ENCODE measurements at regions of chr9 and their contacts with region 1.

Region 1: DNA sequence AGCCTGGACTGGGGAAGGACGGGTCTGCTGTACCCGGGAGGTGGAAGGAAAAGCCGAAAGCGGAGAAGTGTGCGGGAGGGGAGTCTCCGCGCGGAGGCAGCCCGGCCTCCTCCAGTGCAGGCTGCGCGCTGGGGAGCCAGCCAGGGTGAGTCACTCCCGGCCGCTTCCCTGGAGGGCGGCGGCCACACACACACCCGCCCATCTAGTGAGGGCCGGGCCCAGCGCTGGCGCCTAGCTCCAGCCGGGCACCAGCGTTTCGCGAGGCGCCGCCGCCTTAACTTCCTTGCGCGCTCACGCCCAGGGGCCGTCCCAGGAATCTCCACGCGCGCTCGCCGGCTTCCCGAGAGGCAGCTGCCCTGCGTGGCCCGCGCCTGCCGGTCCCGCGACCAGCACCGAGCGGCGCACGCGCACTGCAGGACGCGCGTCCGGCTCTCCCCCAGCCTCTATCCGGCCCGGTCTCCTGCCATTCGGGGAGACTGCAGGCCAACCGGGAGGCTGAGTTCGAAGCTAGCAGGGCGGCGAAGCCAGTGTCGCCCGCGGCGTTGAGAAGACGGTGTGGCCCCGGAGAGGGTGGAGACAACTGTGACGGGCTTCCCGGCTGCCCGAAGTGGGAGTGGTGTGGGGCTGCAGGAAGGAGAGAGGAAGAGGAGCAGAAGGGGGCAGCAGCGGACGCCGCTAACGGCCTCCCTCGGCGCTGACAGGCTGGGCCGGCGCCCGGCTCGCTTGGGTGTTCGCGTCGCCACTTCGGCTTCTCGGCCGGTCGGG is at the start of gene JAK2:
- DNase-seq: peak; percentile 91
- H3K4me3 Mint-ChIP-seq: no peak within 1 kb of the TSS
- H3K27ac Mint-ChIP-seq: peak within 1 kb of the TSS; percentile 96
- H3K4me1 Mint-ChIP-seq: peaks cover 45% of the 10 kb centered on the region
- H3K27me3 Mint-ChIP-seq: no peaks in the 10 kb centered on the region
- total RNA-seq, gene JAK2: 29.4 and 32.3 TPM in 2 replicates

Region 2: GRCh38 chr9:4762108-4762885 is 222.5 kb before region 1 on chr9:
- intact Hi-C with region 1: loop called (anchors 1 kb)
- DNase-seq: peak; percentile 72
- H3K4me3 Mint-ChIP-seq: peak overlapping the region; percentile 63
- H3K27ac Mint-ChIP-seq: peak overlapping the region; percentile 78
- H3K4me1 Mint-ChIP-seq: peaks cover 12% of the 10 kb centered on the region
- H3K27me3 Mint-ChIP-seq: peaks cover 9% of the 10 kb centered on the region

Region 3: GRCh38 chr9:4866239-4866969 is 118.4 kb before region 1 on chr9:
- intact Hi-C with region 1: loop called (anchors 1 kb)
- DNase-seq: peak; percentile 44
- H3K4me3 Mint-ChIP-seq: peak overlapping the region; percentile 72
- H3K27ac Mint-ChIP-seq: peak overlapping the region; percentile 95
- H3K4me1 Mint-ChIP-seq: peaks cover 59% of the 10 kb centered on the region
- H3K27me3 Mint-ChIP-seq: no peaks in the 10 kb centered on the region

Region 4: GRCh38 chr9:4894076-4894475 is 90.7 kb before region 1 on chr9:
- intact Hi-C with region 1: no loop called
- DNase-seq: no peak
- H3K4me3 Mint-ChIP-seq: no peak overlapping the region
- H3K27ac Mint-ChIP-seq: no peak overlapping the region
- H3K4me1 Mint-ChIP-seq: peaks cover 14% of the 10 kb centered on the region
- H3K27me3 Mint-ChIP-seq: no peaks in the 10 kb centered on the region

Region 5: DNA sequence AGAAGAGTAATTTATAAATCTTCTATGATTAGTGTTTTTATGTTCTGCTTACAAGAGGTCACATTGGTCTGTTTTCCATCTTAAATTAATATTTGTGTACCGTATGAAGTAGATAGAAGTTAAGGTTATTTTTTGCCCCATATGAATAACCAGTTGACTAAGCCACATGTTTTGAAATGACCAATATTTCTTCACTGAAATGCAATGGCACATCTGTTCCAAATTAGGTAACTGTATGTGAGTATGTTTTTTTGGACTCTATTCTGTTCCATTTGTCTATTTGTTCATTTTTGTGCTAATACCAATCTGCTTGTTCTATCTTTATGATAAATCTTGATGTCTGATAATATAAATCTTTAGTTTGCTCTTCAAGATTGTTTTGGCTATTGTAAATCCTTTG is 18.0 kb after region 1 on chr9:
- intact Hi-C with region 1: no loop called
- DNase-seq: no peak
- H3K4me3 Mint-ChIP-seq: no peak overlapping the region
- H3K27ac Mint-ChIP-seq: no peak overlapping the region
- H3K4me1 Mint-ChIP-seq: peaks cover 27% of the 10 kb centered on the region
- H3K27me3 Mint-ChIP-seq: no peaks in the 10 kb centered on the region

Region 6: DNA sequence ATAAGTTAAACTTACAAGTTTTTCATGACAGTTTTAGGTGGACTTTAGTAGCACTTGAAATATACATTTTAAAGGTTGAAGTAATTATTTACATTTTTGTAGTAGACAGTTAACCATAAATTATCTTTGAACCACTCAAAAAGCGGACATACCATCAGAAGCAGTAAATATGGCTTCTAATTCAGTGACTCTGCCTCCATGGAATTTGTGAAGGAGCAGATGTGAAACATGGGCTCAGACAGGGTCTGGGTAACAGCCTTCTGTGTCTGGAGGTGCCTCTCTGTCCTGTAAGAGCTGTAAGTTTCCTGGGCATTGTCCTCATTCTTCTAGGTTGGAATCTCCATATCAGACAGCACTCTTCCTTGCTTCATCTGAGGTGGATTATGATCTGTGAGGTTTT is 307.3 kb after region 1 on chr9:
- intact Hi-C with region 1: no loop called
- DNase-seq: no peak
- H3K4me3 Mint-ChIP-seq: no peak overlapping the region
- H3K27ac Mint-ChIP-seq: no peak overlapping the region
- H3K4me1 Mint-ChIP-seq: no peaks in the 10 kb centered on the region
- H3K27me3 Mint-ChIP-seq: peaks cover 23% of the 10 kb centered on the region

Region 7: GRCh38 chr9:5392285-5392684 is 407.5 kb after region 1 on chr9:
- intact Hi-C with region 1: no loop called
- DNase-seq: no peak
- H3K4me3 Mint-ChIP-seq: no peak overlapping the region
- H3K27ac Mint-ChIP-seq: no peak overlapping the region
- H3K4me1 Mint-ChIP-seq: peaks cover 33% of the 10 kb centered on the region
- H3K27me3 Mint-ChIP-seq: no peaks in the 10 kb centered on the region

Region 8: GRCh38 chr9:5437254-5438216 is 452.7 kb after region 1 on chr9 and contains the start of gene PLGRKT:
- intact Hi-C with region 1: loop called (anchors 5 kb)
- DNase-seq: peak; percentile 89
- H3K4me3 Mint-ChIP-seq: peak within 1 kb of the TSS; percentile 91
- H3K27ac Mint-ChIP-seq: peak within 1 kb of the TSS; percentile 96
- H3K4me1 Mint-ChIP-seq: peaks cover 54% of the 10 kb centered on the region
- H3K27me3 Mint-ChIP-seq: no peaks in the 10 kb centered on the region
- total RNA-seq, gene PLGRKT: 39.3 and 42.3 TPM in 2 replicates

Region 9: GRCh38 chr9:5628530-5629311 is 643.9 kb after region 1 on chr9 and contains the start of gene RIC1:
- intact Hi-C with region 1: loop called (anchors 2 kb)
- DNase-seq: peak; percentile 89
- H3K4me3 Mint-ChIP-seq: peak within 1 kb of the TSS; percentile 100
- H3K27ac Mint-ChIP-seq: peak within 1 kb of the TSS; percentile 97
- H3K4me1 Mint-ChIP-seq: peaks cover 56% of the 10 kb centered on the region
- H3K27me3 Mint-ChIP-seq: no peaks in the 10 kb centered on the region
- total RNA-seq, gene RIC1: 21.5 and 22.1 TPM in 2 replicates